Natural killer cell (primary cell): ENCODE measurements at regions of chr14 and their contacts with region 1.

Region 1: DNA sequence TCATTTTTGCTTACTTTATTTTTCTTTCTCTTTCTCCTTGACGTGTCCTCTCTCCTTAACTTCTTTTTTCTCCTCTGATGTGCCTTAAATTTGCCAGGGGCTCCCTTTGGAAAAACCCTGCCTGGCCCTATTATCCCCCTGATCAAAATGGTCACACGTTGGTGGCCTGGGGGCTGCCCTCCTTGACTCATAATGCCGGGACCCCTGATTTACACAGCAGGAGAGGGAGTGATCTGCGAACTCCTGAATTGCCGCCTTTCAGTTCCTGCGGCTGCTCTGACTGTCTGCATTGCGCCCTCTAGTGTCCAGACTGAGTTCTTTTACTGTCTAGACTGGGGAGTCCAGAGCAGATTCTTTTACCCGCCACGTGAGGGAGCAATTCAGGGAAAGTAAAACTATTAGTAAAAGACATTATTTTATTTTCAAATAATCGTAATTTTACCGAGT is 44.8 kb upstream of the GZMB start:
- DNase-seq: peak; percentile 65 to 96
- ATAC-seq: peak; percentile 62 to 89 (median 73)
- H3K4me3 ChIP-seq: peak overlapping the region; percentile 79
- H3K4me3 Mint-ChIP-seq: peak overlapping the region; percentile 99
- H3K27ac ChIP-seq: peak overlapping the region; percentile 92
- H3K27ac Mint-ChIP-seq: peak overlapping the region; percentile 99
- H3K4me1 ChIP-seq: peaks cover 52% of the 10 kb centered on the region
- H3K4me1 Mint-ChIP-seq: peaks cover 87 to 92% of the 10 kb centered on the region in 2 donors
- H3K27me3 ChIP-seq: no peaks in the 10 kb centered on the region
- H3K27me3 Mint-ChIP-seq: no peaks in the 10 kb centered on the region
- CTCF ChIP-seq: peak; percentile 100

Region 2: DNA sequence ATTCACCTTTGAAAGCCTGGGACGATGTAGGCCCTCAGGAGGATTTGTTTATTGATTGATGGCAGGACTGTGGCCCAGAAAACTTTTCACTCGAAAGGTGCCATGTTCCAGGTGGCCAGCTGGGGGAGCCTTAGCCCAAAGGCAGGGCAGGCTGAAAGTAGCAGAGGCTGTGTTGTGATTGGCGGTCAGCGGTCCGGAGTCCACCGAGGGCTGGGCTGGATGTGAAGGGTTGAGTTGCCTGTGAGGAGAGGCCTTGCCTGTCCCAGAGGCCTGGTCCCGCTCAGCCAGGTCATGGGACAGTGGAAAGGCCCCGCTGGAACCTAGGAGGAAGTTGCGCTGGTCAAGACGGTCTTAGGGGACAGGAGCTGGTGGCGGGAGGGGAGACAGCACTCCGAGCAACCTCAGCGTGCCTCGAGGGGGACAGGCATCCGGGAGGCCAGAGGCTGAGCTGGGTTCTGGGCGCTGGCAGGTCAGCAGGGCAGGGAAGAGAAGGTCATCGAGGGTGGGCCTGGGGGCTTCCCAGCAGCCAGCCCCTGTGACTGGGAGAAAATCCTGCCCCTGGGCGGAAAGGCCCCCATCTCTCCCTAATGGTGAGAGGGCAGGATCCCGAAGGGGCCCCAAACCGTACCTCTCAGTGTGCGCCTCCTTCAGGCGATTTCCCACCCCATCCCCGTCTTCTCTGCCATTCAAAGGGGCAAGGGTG is 197.1 kb before region 1 on chr14:
- intact Hi-C with region 1: loop called (anchors 5 kb)
- DNase-seq: peak; percentile 42 to 57
- ATAC-seq: peak; percentile 76 to 98 (median 78)
- H3K4me3 ChIP-seq: no peak overlapping the region
- H3K4me3 Mint-ChIP-seq: peak overlapping the region; percentile 87
- H3K27ac ChIP-seq: no peak overlapping the region
- H3K27ac Mint-ChIP-seq: peak overlapping the region in 1 of 2 donors; percentile 75
- H3K4me1 ChIP-seq: peaks cover 15% of the 10 kb centered on the region
- H3K4me1 Mint-ChIP-seq: peaks cover 12 to 20% of the 10 kb centered on the region in 2 donors
- H3K27me3 ChIP-seq: no peaks in the 10 kb centered on the region
- H3K27me3 Mint-ChIP-seq: no peaks in the 10 kb centered on the region
- CTCF ChIP-seq: peak; percentile 70

Region 3: DNA sequence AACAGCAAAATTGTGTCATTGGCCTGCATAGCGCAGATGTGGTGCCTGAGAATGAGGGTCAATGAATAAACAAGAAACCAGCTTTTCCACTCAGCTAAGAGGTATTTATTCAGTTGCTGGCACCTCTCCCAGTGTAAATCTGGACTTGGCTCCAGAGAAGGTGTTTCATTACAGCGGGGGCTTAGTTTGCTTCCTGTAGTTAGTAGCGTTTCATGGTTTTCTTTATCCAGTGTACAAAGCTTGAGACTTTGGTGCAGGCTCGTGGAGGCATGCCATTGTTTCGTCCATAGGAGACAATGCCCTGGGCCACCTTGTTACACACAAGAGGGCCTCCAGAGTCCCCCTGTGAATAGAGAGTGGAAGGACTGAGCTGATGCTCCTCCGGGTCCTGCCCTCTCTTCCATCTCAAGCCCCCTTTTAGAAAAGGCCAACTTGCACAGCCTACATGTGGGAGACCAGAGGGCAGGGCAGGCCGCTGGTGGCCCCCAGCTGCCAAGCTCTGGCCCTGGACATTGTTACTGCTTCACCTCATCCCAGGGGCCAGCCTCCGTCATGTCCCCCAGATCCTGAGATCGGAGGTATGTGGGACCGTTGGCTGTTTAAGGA is 47.8 kb before region 1 on chr14:
- intact Hi-C with region 1: loop called (anchors 1 kb)
- DNase-seq: no peak
- ATAC-seq: no peak
- H3K4me3 ChIP-seq: peak overlapping the region; percentile 72
- H3K4me3 Mint-ChIP-seq: peak overlapping the region; percentile 94
- H3K27ac ChIP-seq: peak overlapping the region; percentile 99
- H3K27ac Mint-ChIP-seq: peak overlapping the region; percentile 99
- H3K4me1 ChIP-seq: peaks cover 79% of the 10 kb centered on the region
- H3K4me1 Mint-ChIP-seq: peaks cover 86 to 89% of the 10 kb centered on the region in 2 donors
- H3K27me3 ChIP-seq: no peaks in the 10 kb centered on the region
- H3K27me3 Mint-ChIP-seq: no peaks in the 10 kb centered on the region
- CTCF ChIP-seq: no peak

Region 4: DNA sequence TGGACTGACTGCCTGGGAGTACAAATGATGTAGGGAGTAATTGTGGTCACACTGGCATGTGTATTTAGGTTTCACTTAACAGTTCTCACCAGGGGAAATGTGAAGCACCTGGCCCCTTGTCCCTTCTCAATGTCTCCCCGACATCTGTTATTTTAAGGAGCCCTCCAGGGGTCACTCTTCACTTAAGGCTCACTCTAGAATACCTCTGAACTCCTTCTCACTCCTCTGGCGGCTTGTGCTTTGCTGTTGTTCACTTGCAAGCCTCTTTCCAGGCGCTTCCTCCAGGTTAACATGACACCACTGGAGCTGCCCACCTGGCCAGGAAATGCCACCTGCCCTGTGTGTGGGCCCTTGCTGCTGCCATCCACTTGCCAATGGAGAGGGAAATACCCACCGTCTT is 11.7 kb after region 1 on chr14:
- intact Hi-C with region 1: loop called (anchors 1 kb)
- DNase-seq: peak in 1 of 2 donors; percentile 55
- ATAC-seq: peak in 1 of 3 donors; percentile 17
- H3K4me3 ChIP-seq: no peak overlapping the region
- H3K4me3 Mint-ChIP-seq: peak overlapping the region; percentile 22
- H3K27ac ChIP-seq: no peak overlapping the region
- H3K27ac Mint-ChIP-seq: peak overlapping the region in 1 of 2 donors; percentile 78
- H3K4me1 ChIP-seq: peaks cover 57% of the 10 kb centered on the region
- H3K4me1 Mint-ChIP-seq: peaks cover 62% of the 10 kb centered on the region in 2 donors
- H3K27me3 ChIP-seq: no peaks in the 10 kb centered on the region
- H3K27me3 Mint-ChIP-seq: no peaks in the 10 kb centered on the region
- CTCF ChIP-seq: peak; percentile 40